ENCODE measurements at regions of chr5 and their contacts with region 1.

Region 1: DNA sequence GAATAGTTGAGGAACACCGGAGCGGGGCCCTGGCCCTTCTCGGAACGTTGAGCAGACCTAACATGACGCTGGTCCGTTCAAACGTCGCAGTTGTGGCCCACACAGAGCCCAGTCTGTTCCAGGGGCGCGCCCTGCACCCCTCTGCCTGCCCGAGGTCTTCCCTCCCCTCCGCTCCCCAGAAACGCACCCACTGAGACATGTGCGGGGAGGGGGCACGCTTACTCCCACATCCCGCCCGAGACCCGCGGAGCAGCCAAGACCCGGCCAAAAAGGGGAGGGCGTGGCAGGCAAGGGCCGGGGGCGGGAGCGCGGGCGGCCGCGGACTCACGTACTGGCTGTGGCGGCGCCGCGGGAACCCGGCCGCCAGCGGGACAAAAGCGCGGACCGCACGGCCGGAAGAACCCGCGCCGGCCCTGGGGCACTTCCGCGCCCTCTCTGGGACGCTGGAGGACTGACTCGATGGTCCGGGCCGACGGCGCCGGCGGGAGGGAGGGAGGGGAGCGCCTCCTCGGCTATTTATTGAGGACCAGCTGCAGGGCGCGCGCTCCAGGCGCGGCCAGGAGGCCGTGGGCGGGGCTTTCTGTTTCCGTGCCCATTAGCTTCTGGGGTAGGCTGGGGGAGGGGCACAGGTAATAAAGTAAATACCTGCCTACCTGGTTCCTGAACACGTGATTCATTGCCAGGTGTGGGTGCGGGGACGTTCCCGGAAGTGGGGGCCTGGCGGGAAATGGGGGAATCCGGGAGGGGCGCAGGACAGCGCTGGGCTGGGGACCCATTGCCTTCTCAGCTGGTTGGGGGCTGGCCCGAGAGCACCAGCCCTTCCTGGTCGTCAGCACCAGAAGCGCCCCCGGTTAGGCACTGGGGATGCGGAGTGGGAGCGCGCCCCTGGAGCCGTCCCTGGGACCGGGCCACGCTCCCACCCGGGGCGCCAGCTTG is at the start of gene ZFP62:
- DNase-seq: peak; percentile 89 to 96 (median 90)
- ATAC-seq: peak; percentile 95
- H3K4me3 ChIP-seq: peak within 1 kb of the TSS; percentile 88
- H3K27ac ChIP-seq: peak within 1 kb of the TSS; percentile 91
- H3K4me1 ChIP-seq: peaks cover 13 to 16% of the 10 kb centered on the region in 2 experiments; a peak in 4 of 5 replicates
- H3K27me3 ChIP-seq: no peaks in the 10 kb centered on the region
- CTCF ChIP-seq: 0 out of 6 replicates have a peak, but pooled peaks of 1 of the 3 experiments have one; percentile 6
- EP300 ChIP-seq: peak; percentile 24
- POLR2A ChIP-seq: peak; percentile 81
- RAD21 ChIP-seq: no peak; a peak in 3 of 4 replicates
- polyA plus RNA-seq, gene ZFP62: 12.2 to 18.1 TPM

Region 2: DNA sequence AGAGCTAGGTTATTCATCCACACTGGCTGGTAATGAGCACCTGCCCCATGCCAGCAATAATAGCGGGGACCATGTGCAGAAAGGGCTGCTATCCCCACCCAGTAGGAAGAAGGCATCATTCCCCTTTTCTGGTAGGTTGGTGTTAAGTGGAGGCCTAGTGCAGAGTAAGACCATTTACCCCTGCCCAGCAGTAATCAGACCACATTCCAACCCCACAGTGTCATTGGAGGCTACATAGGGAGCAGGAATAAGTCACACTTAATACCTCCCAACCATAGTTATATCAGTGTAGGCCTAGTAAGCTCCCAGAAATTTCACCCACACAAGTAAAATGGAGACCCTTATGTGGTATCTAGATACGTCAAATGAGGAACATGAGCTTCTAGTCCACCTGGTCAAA is 1971.1 kb before region 1 on chr5:
- CTCF ChIA-PET with region 1: no interaction called
- POLR2A ChIA-PET with region 1: no interaction called
- in situ Hi-C with region 1: no loop called
- intact Hi-C with region 1: no loop called
- DNase-seq: no peak
- ATAC-seq: no peak
- H3K4me3 ChIP-seq: no peak overlapping the region
- H3K27ac ChIP-seq: no peak overlapping the region
- H3K4me1 ChIP-seq: no peaks in the 10 kb centered on the region
- H3K27me3 ChIP-seq: no peaks in the 10 kb centered on the region
- CTCF ChIP-seq: no peak
- EP300 ChIP-seq: no peak
- POLR2A ChIP-seq: no peak
- RAD21 ChIP-seq: no peak

Region 3: GRCh38 chr5:179608131-179608581 is 1253.0 kb before region 1 on chr5:
- CTCF ChIA-PET with region 1: no interaction called
- POLR2A ChIA-PET with region 1: no interaction called
- in situ Hi-C with region 1: no loop called
- intact Hi-C with region 1: no loop called
- DNase-seq: peak in 1 of 4 experiments; percentile 9
- ATAC-seq: peak; percentile 4
- H3K4me3 ChIP-seq: no peak overlapping the region
- H3K27ac ChIP-seq: no peak overlapping the region
- H3K4me1 ChIP-seq: peaks cover 10 to 25% of the 10 kb centered on the region in 2 experiments; a peak in 4 of 5 replicates
- H3K27me3 ChIP-seq: no peaks in the 10 kb centered on the region
- CTCF ChIP-seq: no peak
- EP300 ChIP-seq: no peak
- POLR2A ChIP-seq: peak; percentile 22; the same call in 1 of the 2 replicates
- RAD21 ChIP-seq: no peak

Region 4: GRCh38 chr5:180670586-180671359 is 190.4 kb before region 1 on chr5:
- CTCF ChIA-PET with region 1: no interaction called
- POLR2A ChIA-PET with region 1: no interaction called
- in situ Hi-C with region 1: no loop called
- intact Hi-C with region 1: loop called (anchors 10 kb)
- DNase-seq: peak; percentile 49 to 73 (median 66)
- ATAC-seq: peak; percentile 76
- H3K4me3 ChIP-seq: no peak overlapping the region
- H3K27ac ChIP-seq: no peak overlapping the region
- H3K4me1 ChIP-seq: peaks cover 18 to 20% of the 10 kb centered on the region in 2 experiments
- H3K27me3 ChIP-seq: peaks cover 9 to 33% of the 10 kb centered on the region in 2 experiments; a peak in 4 of 5 replicates
- CTCF ChIP-seq: peak; percentile 69 to 86 (median 85)
- EP300 ChIP-seq: no peak
- POLR2A ChIP-seq: no peak
- RAD21 ChIP-seq: peak; percentile 47 to 77

Region 5: GRCh38 chr5:180802325-180803180 is 58.6 kb before region 1 on chr5 and contains the start of gene MGAT1:
- CTCF ChIA-PET with region 1: no interaction called
- POLR2A ChIA-PET with region 1: no interaction called
- in situ Hi-C with region 1: no loop called
- intact Hi-C with region 1: loop called (anchors 5 kb)
- DNase-seq: peak; percentile 85 to 96 (median 94)
- ATAC-seq: peak; percentile 88
- H3K4me3 ChIP-seq: peak within 1 kb of the TSS; percentile 84
- H3K27ac ChIP-seq: peak within 1 kb of the TSS; percentile 89
- H3K4me1 ChIP-seq: peaks cover 61 to 64% of the 10 kb centered on the region in 2 experiments
- H3K27me3 ChIP-seq: no peaks in the 10 kb centered on the region
- CTCF ChIP-seq: no peak
- EP300 ChIP-seq: no peak
- POLR2A ChIP-seq: peak; percentile 81
- RAD21 ChIP-seq: no peak; a peak in 1 of 4 replicates
- polyA plus RNA-seq, gene MGAT1: 3.9 to 5.1 TPM

Region 6: GRCh38 chr5:181181650-181182565 is 320.8 kb after region 1 on chr5:
- CTCF ChIA-PET with region 1: no interaction called
- POLR2A ChIA-PET with region 1: no interaction called
- in situ Hi-C with region 1: no loop called
- intact Hi-C with region 1: loop called (anchors 5 kb)
- DNase-seq: peak in 2 of 4 experiments; percentile 28 to 76
- ATAC-seq: peak; percentile 69
- H3K4me3 ChIP-seq: no peak overlapping the region
- H3K27ac ChIP-seq: no peak overlapping the region
- H3K4me1 ChIP-seq: peaks cover 19 to 39% of the 10 kb centered on the region in 2 experiments
- H3K27me3 ChIP-seq: no peaks in the 10 kb centered on the region
- CTCF ChIP-seq: peak; percentile 76 to 87 (median 79)
- EP300 ChIP-seq: no peak
- POLR2A ChIP-seq: no peak
- RAD21 ChIP-seq: peak; percentile 74 to 88